Activated CD8-positive, alpha-beta memory T cell treated with anti-CD3 and anti-CD28 coated beads, Interleukin-2, amount 10 ng/mL, durations not matched to agents 7 days and 5 days (primary cell): ENCODE measurements at regions of chr14 and their contacts with region 1.

Region 1: GRCh38 chr14:77320238-77320935 is at the start of gene POMT2:
- DNase-seq: peak; percentile 94
- ATAC-seq: peak; percentile 62
- H3K4me3 Mint-ChIP-seq: peak within 1 kb of the TSS; percentile 90
- H3K27ac Mint-ChIP-seq: peak within 1 kb of the TSS; percentile 98
- H3K4me1 Mint-ChIP-seq: peaks cover 21% of the 10 kb centered on the region
- H3K27me3 Mint-ChIP-seq: no peaks in the 10 kb centered on the region
- total RNA-seq, gene POMT2: 14.3 to 16.2 TPM

Region 2: GRCh38 chr14:77301103-77301502 is 19.3 kb before region 1 on chr14:
- CTCF ChIA-PET with region 1: interaction called, 170 read pairs
- DNase-seq: peak; percentile 78
- ATAC-seq: no peak
- H3K4me3 Mint-ChIP-seq: no peak overlapping the region
- H3K27ac Mint-ChIP-seq: no peak overlapping the region
- H3K4me1 Mint-ChIP-seq: peaks cover 22% of the 10 kb centered on the region
- H3K27me3 Mint-ChIP-seq: peaks cover 3% of the 10 kb centered on the region